ENCODE measurements at regions of chr3 and their contacts with region 1.

Region 1: GRCh38 chr3:121595765-121596406 is 2.7 kb downstream of the FBXO40 start:
- DNase-seq: no peak

Region 2: DNA sequence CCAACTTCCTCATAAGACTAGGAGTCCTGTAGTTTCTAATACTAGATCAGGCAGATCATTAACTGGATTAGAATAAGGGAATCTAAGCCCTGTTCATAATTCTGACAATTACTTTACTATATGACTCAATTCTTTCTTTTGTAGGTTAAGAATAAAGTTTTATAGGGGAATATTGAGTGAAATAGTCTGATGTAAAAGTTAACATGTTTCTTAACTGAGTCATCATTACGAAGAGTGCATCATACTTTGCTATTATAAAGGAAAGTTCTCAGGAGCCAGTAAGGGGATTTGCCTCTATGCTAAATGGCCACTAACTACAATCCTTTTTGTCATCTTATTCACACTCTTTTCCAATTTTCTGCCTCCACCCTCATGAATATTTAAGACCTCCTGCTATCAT is 113.2 kb before region 1 on chr3:
- intact Hi-C with region 1: no loop called
- DNase-seq: no peak

Region 3: DNA sequence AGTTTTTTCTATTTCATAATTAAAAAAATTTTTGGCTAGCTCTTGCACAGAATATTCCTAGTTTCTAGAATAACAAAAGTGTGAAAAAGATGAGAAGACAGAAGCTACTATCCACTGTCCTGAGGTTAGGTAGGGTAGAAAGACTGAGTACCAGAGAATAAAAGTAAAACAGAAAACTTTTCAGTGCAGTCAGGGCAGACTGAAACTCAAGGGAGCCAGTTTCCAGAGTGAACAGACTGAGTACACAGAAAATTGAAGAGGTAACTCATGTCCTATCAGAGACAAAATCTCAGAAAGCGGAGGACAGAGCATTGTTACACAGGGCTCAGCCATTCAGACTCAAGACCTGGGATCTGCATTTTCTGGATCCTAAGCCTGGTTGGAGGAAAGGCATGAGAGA is 11.5 kb before region 1 on chr3:
- intact Hi-C with region 1: loop called in 1 of 2 experiments (anchors 1 kb)
- DNase-seq: no peak